CD8-positive, alpha-beta memory T cell (primary cell): ENCODE measurements at regions of chr3 and their contacts with region 1.

Region 1: DNA sequence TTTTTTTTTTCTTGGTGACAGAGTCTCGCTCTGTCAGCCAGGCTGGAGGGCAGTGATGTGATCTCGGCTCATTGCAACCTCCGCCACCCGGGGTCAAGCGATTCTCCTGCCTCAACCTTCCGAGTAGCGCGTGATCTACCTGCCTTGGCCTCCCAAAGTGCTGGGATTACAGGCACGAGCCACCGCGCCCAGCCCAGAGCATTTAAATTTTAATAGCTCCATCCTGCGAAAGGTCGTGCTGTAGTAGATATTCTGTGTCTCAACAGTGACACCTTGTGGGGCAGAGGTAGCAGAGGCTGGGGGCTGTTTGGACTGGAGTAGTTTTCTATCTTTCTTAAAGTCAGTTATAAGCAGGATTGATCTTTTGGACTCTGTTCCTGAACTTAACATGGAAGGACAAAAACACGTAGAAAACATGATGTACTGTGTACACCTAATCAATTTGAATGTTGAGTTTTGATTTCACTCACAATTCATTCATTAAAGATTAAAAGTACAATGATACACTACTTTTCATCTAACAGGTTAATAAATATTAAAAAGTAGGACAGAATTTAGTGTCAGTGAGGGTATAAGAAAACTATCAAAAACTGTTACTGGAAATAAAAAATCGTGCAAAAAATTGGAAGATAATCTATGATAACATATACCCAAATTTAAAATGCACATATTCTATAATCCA is 11.0 kb upstream of the PDCD6IP start:
- DNase-seq: peak; percentile 29 to 72 (median 49)
- H3K4me3 ChIP-seq: no peak overlapping the region
- H3K4me3 Mint-ChIP-seq: peak overlapping the region in 3 of 7 donors; percentile 6 to 41 (median 36)
- H3K27ac ChIP-seq: no peak overlapping the region
- H3K27ac Mint-ChIP-seq: no peak overlapping the region
- H3K4me1 ChIP-seq: no peaks in the 10 kb centered on the region
- H3K4me1 Mint-ChIP-seq: peaks cover 3 to 5% (median 3%) of the 10 kb centered on the region in 3 donors
- H3K27me3 ChIP-seq: no peaks in the 10 kb centered on the region
- H3K27me3 Mint-ChIP-seq: peaks cover 3 to 26% of the 10 kb centered on the region in 2 donors

Region 2: DNA sequence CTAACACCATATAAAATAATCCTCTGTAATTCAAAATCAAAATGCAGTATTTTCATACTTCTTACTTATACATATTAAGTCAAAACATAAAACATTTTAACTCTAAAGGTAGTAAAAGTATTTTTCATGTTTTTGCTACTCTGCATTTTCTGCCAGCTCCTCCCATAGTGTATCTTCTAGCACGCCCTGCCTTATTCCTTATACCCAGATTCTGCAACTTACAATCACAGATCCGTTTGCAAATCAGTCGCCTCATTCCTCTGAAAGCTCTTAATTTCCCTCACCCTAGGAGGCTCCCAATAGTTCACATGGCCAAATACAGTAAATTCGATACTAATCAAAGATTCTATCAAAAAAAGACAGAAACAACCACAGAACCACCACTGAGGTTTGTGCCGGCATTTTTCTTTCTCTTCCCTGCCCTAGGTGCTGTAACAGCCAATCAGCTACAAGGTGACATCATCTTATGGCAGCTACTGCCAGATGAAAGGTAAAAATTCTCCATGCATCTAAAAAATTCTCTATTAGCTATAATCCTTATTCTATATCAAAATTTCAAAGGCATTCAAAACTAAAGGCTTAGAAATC is 142.3 kb before region 1 on chr3:
- CTCF ChIA-PET with region 1: interaction called, 15 read pairs
- POLR2A ChIA-PET with region 1: no interaction called
- DNase-seq: peak in 4 of 5 donors; percentile 12 to 53 (median 38)
- H3K4me3 ChIP-seq: peak overlapping the region; percentile 51
- H3K4me3 Mint-ChIP-seq: peak overlapping the region; percentile 73 to 88 (median 80)
- H3K27ac ChIP-seq: no peak overlapping the region
- H3K27ac Mint-ChIP-seq: peak overlapping the region; percentile 8 to 94 (median 40)
- H3K4me1 ChIP-seq: peaks cover 4% of the 10 kb centered on the region
- H3K4me1 Mint-ChIP-seq: peaks cover 12 to 22% (median 15%) of the 10 kb centered on the region in 3 donors
- H3K27me3 ChIP-seq: no peaks in the 10 kb centered on the region
- H3K27me3 Mint-ChIP-seq: no peaks in the 10 kb centered on the region

Region 3: GRCh38 chr3:33775363-33775762 is 12.1 kb before region 1 on chr3:
- CTCF ChIA-PET with region 1: interaction called, 13 read pairs
- POLR2A ChIA-PET with region 1: no interaction called
- DNase-seq: no peak
- H3K4me3 ChIP-seq: no peak overlapping the region
- H3K4me3 Mint-ChIP-seq: no peak overlapping the region
- H3K27ac ChIP-seq: no peak overlapping the region
- H3K27ac Mint-ChIP-seq: no peak overlapping the region
- H3K4me1 ChIP-seq: no peaks in the 10 kb centered on the region
- H3K4me1 Mint-ChIP-seq: no peaks in the 10 kb centered on the region
- H3K27me3 ChIP-seq: no peaks in the 10 kb centered on the region
- H3K27me3 Mint-ChIP-seq: peaks cover 8% of the 10 kb centered on the region in 2 donors

Region 4: GRCh38 chr3:33798411-33799201 is 11.1 kb after region 1 on chr3 and contains the start of gene PDCD6IP:
- CTCF ChIA-PET with region 1: interaction called, 45 read pairs
- POLR2A ChIA-PET with region 1: interaction called, 6 read pairs
- DNase-seq: peak; percentile 80 to 91 (median 87)
- H3K4me3 ChIP-seq: peak within 1 kb of the TSS; percentile 90
- H3K4me3 Mint-ChIP-seq: peak within 1 kb of the TSS; percentile 89 to 100 (median 99)
- H3K27ac ChIP-seq: peak within 1 kb of the TSS; percentile 87
- H3K27ac Mint-ChIP-seq: peak within 1 kb of the TSS; percentile 84 to 99 (median 96)
- H3K4me1 ChIP-seq: peaks cover 44% of the 10 kb centered on the region
- H3K4me1 Mint-ChIP-seq: peaks cover 48 to 59% (median 56%) of the 10 kb centered on the region in 3 donors
- H3K27me3 ChIP-seq: no peaks in the 10 kb centered on the region
- H3K27me3 Mint-ChIP-seq: peaks cover 0 to 2% of the 10 kb centered on the region in 2 donors
- total RNA-seq, gene PDCD6IP: 162 to 163 TPM